Activated CD4-positive, alpha-beta T cell treated with anti-CD3 and anti-CD28 coated beads, Interleukin-2, amount 10 ng/mL, durations not matched to agents 24 days and 14 days (primary cell): ENCODE measurements at regions of chr6 and their contacts with region 1.

Region 1: GRCh38 chr6:149094156-149094555 is 223.4 kb upstream of the TAB2 start:
- DNase-seq: peak; percentile 76
- H3K4me3 Mint-ChIP-seq: peak overlapping the region; percentile 71
- H3K27ac Mint-ChIP-seq: peak overlapping the region; percentile 95
- H3K4me1 Mint-ChIP-seq: peaks cover 74% of the 10 kb centered on the region
- H3K27me3 Mint-ChIP-seq: no peaks in the 10 kb centered on the region

Region 2: GRCh38 chr6:149112976-149113375 is 18.8 kb after region 1 on chr6:
- intact Hi-C with region 1: loop called (anchors 2 kb)
- DNase-seq: peak; percentile 55
- H3K4me3 Mint-ChIP-seq: peak overlapping the region; percentile 36
- H3K27ac Mint-ChIP-seq: peak overlapping the region; percentile 89
- H3K4me1 Mint-ChIP-seq: peaks cover 58% of the 10 kb centered on the region
- H3K27me3 Mint-ChIP-seq: no peaks in the 10 kb centered on the region

Region 3: GRCh38 chr6:149129371-149130077 is 35.4 kb after region 1 on chr6:
- intact Hi-C with region 1: loop called (anchors 2 kb)
- DNase-seq: no peak
- H3K4me3 Mint-ChIP-seq: no peak overlapping the region
- H3K27ac Mint-ChIP-seq: peak overlapping the region; percentile 97
- H3K4me1 Mint-ChIP-seq: peaks cover 69% of the 10 kb centered on the region
- H3K27me3 Mint-ChIP-seq: no peaks in the 10 kb centered on the region